A549 (cell line): ENCODE measurements at regions of chr3 and their contacts with region 1.

Region 1: DNA sequence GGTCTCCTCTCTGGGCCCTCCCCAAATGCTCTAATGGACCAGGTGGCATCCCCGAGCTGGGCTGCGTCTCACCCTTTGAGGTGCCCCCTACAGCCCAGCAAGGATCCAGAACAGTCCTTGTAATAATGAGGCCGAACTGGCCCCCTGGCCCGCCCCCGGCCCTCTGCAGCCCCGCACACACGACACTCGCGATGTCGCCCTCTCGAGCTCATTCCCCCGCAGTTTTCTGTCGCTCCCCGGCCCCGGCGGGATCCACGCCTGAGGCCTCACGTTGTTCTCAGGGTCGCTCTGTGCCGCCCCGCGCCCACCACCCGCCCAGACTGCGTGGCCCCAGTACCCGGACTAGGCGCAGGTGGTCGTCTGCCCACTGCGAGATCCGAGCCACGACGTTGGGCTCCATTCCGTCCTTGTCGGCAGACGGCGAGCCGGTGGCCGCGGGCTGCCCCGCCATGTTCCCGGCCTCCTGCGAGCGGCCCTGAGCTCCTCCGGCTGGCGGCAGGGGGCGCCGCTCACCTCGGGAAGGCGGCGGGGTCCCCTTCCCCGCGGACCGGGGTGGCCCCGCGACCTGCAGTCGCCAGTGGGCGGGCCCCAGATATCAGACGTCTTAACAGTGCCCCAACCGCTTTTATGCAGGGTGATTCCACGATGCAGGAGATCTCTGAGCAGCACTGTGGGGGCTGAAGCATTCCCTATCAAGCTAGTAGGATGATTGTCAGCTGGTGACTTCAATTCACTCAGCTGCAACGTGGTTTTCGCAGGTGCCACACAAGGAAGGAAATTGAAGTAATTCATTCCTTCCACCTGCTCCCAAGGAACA is at the start of gene C3orf33:
- DNase-seq: peak; percentile 72 to 84
- ATAC-seq: peak; percentile 97
- H3K4me3 ChIP-seq: peak within 1 kb of the TSS; percentile 80
- H3K27ac ChIP-seq: peak within 1 kb of the TSS; percentile 92
- H3K4me1 ChIP-seq: no peaks in the 10 kb centered on the region
- CTCF ChIP-seq: peak; percentile 94
- EP300 ChIP-seq: no peak
- POLR2A ChIP-seq: peak; percentile 63
- RAD21 ChIP-seq: peak; percentile 65 to 81
- polyA plus RNA-seq, gene C3orf33: 9.3 and 11.1 TPM in 2 replicates

Region 2: DNA sequence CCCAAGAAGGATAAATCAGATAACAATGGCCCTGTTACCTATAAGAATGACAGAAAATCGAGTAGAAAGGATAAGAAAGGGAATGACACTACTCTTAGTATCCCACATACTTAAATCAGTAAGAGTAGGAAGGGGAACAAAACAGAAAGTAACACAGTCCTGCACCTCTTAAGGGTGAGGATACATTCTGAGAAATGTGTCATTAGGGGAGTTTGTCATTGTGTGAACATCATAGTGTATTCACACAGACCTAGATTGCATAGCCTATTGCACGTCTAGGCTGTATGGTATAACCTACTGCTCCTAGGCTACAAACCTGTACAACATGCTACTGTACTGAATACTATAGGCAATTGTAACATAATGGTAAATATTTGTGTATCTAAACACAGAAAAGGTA is 203.7 kb before region 1 on chr3:
- CTCF ChIA-PET with region 1: no interaction called
- POLR2A ChIA-PET with region 1: no interaction called
- DNase-seq: no peak
- ATAC-seq: no peak
- H3K4me3 ChIP-seq: no peak overlapping the region
- H3K27ac ChIP-seq: no peak overlapping the region
- H3K4me1 ChIP-seq: 0 out of 3 replicates have a peak, but pooled peaks cover 6% of the 10 kb centered on the region
- CTCF ChIP-seq: no peak
- EP300 ChIP-seq: no peak
- POLR2A ChIP-seq: no peak
- RAD21 ChIP-seq: no peak

Region 3: GRCh38 chr3:155670335-155670734 is 135.7 kb before region 1 on chr3:
- CTCF ChIA-PET with region 1: no interaction called
- POLR2A ChIA-PET with region 1: no interaction called
- DNase-seq: no peak
- ATAC-seq: no peak
- H3K4me3 ChIP-seq: no peak overlapping the region
- H3K27ac ChIP-seq: no peak overlapping the region
- H3K4me1 ChIP-seq: peaks cover 18% of the 10 kb centered on the region
- CTCF ChIP-seq: no peak
- EP300 ChIP-seq: no peak
- POLR2A ChIP-seq: no peak
- RAD21 ChIP-seq: no peak

Region 4: DNA sequence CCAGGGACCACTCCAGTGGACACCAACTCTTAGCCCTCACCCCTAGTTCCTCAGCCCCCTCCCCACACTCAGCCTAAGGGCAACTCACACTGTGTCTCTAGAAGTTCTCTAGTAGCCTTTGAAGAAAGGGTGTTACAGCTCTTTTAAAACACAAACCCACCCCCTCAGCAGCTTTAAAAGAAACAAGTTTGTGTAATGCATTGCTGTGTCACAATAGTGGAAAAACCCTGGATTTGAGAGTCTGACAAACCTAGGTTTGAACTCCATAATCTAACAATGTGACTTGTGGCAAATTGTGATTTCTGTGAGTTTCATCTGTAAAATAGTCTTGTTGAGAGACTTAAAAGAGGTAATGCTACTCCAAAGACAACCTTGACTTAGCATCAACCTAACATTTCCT is 115.1 kb before region 1 on chr3:
- CTCF ChIA-PET with region 1: no interaction called
- POLR2A ChIA-PET with region 1: no interaction called
- DNase-seq: no peak
- ATAC-seq: no peak
- H3K4me3 ChIP-seq: no peak overlapping the region
- H3K27ac ChIP-seq: no peak overlapping the region
- H3K4me1 ChIP-seq: no peaks in the 10 kb centered on the region
- CTCF ChIP-seq: no peak
- EP300 ChIP-seq: no peak
- POLR2A ChIP-seq: no peak
- RAD21 ChIP-seq: no peak

Region 5: DNA sequence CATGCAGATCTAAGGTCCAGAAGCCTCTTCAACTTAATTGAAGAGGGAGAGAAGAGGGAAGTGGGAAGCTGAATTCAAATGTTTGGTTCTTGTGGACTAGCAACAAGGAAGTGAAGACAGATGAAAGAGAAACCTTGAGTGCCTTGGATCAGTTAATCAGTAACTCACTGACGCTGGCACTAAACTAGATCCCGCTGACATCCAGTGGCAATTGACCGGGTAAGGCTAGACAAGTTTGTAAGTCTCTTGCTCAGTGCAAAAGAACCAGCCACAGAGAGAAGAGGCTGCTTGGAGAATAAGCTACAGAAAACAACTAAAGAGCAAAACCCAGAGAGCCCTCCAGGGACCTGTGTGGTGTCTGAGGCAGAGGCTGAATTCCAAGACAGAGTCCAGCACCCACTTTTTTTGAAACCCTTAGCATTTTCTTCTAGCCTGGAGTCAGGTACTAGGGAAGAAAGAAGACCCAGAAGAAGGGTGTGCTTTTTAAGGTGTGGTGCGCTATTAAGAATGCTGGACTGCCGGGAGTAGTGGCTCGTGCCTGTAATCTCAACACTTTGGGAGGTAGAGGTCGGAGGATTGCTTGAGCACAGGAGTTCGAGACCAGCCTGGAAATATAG is 68.1 kb before region 1 on chr3:
- CTCF ChIA-PET with region 1: interaction called, 13 read pairs
- POLR2A ChIA-PET with region 1: interaction called, 7 read pairs
- DNase-seq: peak; percentile 91 to 95
- ATAC-seq: peak; percentile 92 to 96
- H3K4me3 ChIP-seq: peak overlapping the region; percentile 51
- H3K27ac ChIP-seq: peak overlapping the region; percentile 75 to 81
- H3K4me1 ChIP-seq: peaks cover 19% of the 10 kb centered on the region
- CTCF ChIP-seq: no peak
- EP300 ChIP-seq: no peak
- POLR2A ChIP-seq: no peak
- RAD21 ChIP-seq: peak; percentile 5 to 26; a peak in 1 of 5 replicates

Region 6: DNA sequence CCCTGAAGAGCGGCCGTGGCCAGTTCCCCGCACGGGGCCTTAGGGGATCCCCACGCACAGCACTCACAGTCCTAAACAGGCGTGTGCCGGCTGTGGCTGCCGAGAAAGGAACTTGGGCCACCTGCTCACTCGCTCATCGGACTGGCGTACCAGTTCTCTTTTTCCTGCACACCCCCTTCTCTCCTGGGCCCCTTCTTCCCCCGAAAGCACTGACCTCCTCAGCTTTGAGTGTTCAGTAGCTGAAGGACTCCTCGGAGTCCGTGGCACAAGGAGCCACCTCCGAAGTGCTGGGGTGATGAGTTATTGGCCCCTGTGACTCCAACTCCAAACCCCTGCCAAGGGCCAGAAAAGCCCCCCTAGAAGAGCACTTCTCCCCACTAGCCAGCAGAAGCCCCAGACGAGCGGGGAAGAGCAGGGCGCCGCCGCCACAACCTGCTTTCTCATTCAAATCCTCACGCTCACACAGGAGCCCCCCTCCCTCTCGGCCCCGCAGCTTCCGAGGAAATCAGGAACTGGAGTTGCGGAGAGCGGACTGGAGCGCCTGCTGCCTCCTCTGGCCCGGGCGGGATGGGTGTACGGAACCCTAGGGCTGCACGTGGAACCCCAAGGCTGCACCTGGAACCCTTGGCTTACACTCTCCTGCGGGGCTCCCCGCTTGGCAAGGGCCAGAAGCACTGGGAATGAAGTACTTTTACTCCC is 61.2 kb before region 1 on chr3 and contains the start of gene PLCH1:
- CTCF ChIA-PET with region 1: interaction called, 19 read pairs
- POLR2A ChIA-PET with region 1: interaction called, 7 read pairs
- DNase-seq: peak; percentile 79 to 80
- ATAC-seq: peak; percentile 81 to 86
- H3K4me3 ChIP-seq: peak within 1 kb of the TSS; percentile 63
- H3K27ac ChIP-seq: peak within 1 kb of the TSS; percentile 69 to 90
- H3K4me1 ChIP-seq: peaks cover 48% of the 10 kb centered on the region
- CTCF ChIP-seq: no peak
- EP300 ChIP-seq: no peak
- POLR2A ChIP-seq: no peak
- RAD21 ChIP-seq: no peak
- polyA plus RNA-seq, gene PLCH1: 11.1 and 14.8 TPM in 2 replicates

Region 7: DNA sequence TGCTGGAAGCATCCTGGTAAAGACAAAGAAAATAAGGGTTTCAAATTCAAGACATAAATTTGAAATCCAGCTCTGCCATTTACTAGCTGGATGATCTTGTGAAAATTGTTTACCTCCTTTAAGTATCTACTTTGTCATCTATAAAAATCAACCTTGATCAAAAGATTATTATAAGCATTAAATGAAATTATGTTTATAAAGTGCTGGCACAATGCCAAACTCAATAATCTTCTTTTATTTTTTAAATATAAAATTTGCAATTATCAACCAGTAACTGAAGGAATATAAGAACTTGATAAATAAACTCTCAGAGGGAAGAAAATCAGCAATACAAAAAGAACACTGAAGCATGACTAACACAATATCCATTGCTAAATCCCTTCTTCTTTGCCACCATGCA is 25.7 kb before region 1 on chr3:
- CTCF ChIA-PET with region 1: interaction called, 10 read pairs
- POLR2A ChIA-PET with region 1: interaction called, 5 read pairs
- DNase-seq: no peak
- ATAC-seq: no peak
- H3K4me3 ChIP-seq: no peak overlapping the region
- H3K27ac ChIP-seq: no peak overlapping the region
- H3K4me1 ChIP-seq: no peaks in the 10 kb centered on the region
- CTCF ChIP-seq: no peak
- EP300 ChIP-seq: no peak
- POLR2A ChIP-seq: no peak
- RAD21 ChIP-seq: no peak

Region 8: GRCh38 chr3:155791190-155791589 is 14.8 kb before region 1 on chr3:
- CTCF ChIA-PET with region 1: interaction called, 22 read pairs
- POLR2A ChIA-PET with region 1: no interaction called
- DNase-seq: peak in 1 of 2 experiments; percentile 49
- ATAC-seq: peak in 1 of 2 experiments; percentile 50; a peak in 2 of 6 replicates
- H3K4me3 ChIP-seq: no peak overlapping the region
- H3K27ac ChIP-seq: peak overlapping the region; percentile 13 to 31; a peak in 4 of 6 replicates
- H3K4me1 ChIP-seq: peaks cover 4% of the 10 kb centered on the region; the same call in 2 of the 3 replicates
- CTCF ChIP-seq: no peak
- EP300 ChIP-seq: no peak
- POLR2A ChIP-seq: no peak
- RAD21 ChIP-seq: no peak

Region 9: GRCh38 chr3:155854141-155854940 is 48.3 kb after region 1 on chr3 and contains the start of gene SLC33A1:
- CTCF ChIA-PET with region 1: interaction called, 40 read pairs
- POLR2A ChIA-PET with region 1: interaction called, 16 read pairs
- DNase-seq: peak; percentile 100
- ATAC-seq: peak; percentile 98
- H3K4me3 ChIP-seq: peak within 1 kb of the TSS; percentile 71
- H3K27ac ChIP-seq: peak within 1 kb of the TSS; percentile 92 to 94
- H3K4me1 ChIP-seq: peaks cover 16% of the 10 kb centered on the region
- CTCF ChIP-seq: no peak
- EP300 ChIP-seq: peak in 1 of 2 experiments; percentile 41; a peak in 1 of 5 replicates
- POLR2A ChIP-seq: peak; percentile 91
- RAD21 ChIP-seq: no peak
- polyA plus RNA-seq, gene SLC33A1: 42.6 and 45.9 TPM in 2 replicates

Region 10: DNA sequence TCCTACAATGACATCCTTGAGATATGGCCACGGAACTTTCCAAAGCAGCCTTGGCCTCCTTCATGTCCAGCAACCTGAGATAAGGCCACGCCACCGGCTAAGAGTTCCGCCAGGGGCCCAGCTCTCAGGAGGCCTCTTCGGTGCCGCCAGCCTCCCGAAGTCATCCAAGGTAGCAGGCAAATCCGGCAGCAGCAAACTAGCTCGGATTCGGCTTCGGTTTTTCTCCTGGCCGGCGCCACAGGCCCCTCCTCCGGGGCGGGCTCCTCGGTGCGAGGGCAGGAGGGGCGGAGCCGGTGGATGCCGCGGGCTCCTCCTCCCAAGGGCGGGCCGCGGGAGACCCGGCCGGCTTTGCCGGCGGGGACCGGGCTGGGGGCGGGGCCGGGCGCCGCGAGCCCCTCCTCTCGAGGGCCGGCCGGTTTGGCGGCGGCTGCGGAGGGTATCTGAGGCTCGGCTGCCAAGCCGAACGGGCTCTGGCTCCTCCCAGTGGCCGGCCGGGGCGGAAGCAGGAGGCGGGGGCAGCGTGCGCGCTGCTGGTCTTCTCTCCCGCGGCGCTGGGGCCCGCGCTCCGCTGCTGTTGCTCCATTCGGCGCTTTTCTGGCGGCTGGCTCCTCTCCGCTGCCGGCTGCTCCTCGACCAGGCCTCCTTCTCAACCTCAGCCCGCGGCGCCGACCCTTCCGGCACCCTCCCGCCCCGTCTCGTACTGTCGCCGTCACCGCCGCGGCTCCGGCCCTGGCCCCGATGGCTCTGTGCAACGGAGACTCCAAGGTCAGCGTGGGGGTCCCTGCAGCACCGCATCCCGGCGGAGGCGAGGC is 64.3 kb after region 1 on chr3 and contains the start of gene GMPS:
- CTCF ChIA-PET with region 1: interaction called, 24 read pairs
- POLR2A ChIA-PET with region 1: interaction called, 24 read pairs
- DNase-seq: peak; percentile 85 to 91
- ATAC-seq: peak; percentile 90 to 93
- H3K4me3 ChIP-seq: peak within 1 kb of the TSS; percentile 97
- H3K27ac ChIP-seq: peak within 1 kb of the TSS; percentile 95 to 97
- H3K4me1 ChIP-seq: peaks cover 29% of the 10 kb centered on the region; the same call in 2 of the 3 replicates
- CTCF ChIP-seq: peak; percentile 51
- EP300 ChIP-seq: no peak
- POLR2A ChIP-seq: peak; percentile 70
- RAD21 ChIP-seq: peak; percentile 24 to 58; a peak in 4 of 5 replicates
- polyA plus RNA-seq, gene GMPS: 77.2 and 114 TPM in 2 replicates